HepG2 (cell line): ENCODE measurements at regions of chr1 and their contacts with region 1.

Region 1: GRCh38 chr1:245810789-245811337 is 656.1 kb downstream of the KIF26B start:
- DNase-seq: peak; percentile 89
- ATAC-seq: peak; percentile 97
- H3K4me3 ChIP-seq: peak overlapping the region in 1 of 3 experiments; percentile 22; a peak in 1 of 6 replicates
- H3K27ac ChIP-seq: peak overlapping the region; percentile 76
- H3K4me1 ChIP-seq: peaks cover 76% of the 10 kb centered on the region
- H3K27me3 ChIP-seq: no peaks in the 10 kb centered on the region
- CTCF ChIP-seq: no peak
- EP300 ChIP-seq: peak in 1 of 2 experiments; percentile 89; a peak in 2 of 4 replicates
- POLR2A ChIP-seq: no peak
- RAD21 ChIP-seq: no peak

Region 2: DNA sequence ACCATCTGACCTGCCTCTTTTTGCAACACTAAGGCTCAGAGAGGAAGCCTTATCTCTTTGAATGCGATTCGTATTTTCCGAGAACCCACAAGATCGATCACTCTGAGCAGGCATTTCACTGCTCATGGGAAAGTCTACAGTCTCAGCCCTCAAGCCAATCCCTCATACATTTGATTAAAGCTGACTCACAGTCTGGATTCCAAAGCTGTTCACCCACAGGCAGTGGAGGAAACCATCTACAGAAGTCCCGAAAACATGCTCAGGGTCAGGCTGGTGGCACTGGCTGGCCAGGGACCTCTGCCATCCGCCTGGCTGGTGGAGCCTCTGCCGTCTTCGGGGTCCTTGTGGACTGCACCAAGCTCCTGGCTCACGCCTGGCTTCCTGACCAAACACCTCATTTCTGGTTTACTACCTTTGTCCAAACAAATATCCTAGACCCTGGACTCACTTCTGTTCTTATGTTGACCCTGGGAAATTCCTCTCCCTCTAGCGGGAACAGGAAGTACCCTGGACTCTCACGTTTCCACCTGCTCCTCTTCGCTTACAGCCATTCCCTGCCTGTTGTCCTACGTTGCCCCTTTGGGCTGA is 46.2 kb after region 1 on chr1:
- CTCF ChIA-PET with region 1: no interaction called
- POLR2A ChIA-PET with region 1: interaction called, 9 read pairs
- in situ Hi-C with region 1: no loop called
- intact Hi-C with region 1: loop called (anchors 2 kb)
- DNase-seq: peak; percentile 82
- ATAC-seq: peak; percentile 92
- H3K4me3 ChIP-seq: peak overlapping the region; percentile 33 to 63 (median 38); a peak in 5 of 6 replicates
- H3K27ac ChIP-seq: peak overlapping the region; percentile 85
- H3K4me1 ChIP-seq: peaks cover 37% of the 10 kb centered on the region
- H3K27me3 ChIP-seq: no peaks in the 10 kb centered on the region
- CTCF ChIP-seq: peak; percentile 67
- EP300 ChIP-seq: peak in 1 of 2 experiments; percentile 45; a peak in 2 of 4 replicates
- POLR2A ChIP-seq: peak; percentile 56 to 65; a peak in 2 of 4 replicates
- RAD21 ChIP-seq: 0 out of 2 replicates have a peak, but pooled peaks have one; percentile 21

Region 3: DNA sequence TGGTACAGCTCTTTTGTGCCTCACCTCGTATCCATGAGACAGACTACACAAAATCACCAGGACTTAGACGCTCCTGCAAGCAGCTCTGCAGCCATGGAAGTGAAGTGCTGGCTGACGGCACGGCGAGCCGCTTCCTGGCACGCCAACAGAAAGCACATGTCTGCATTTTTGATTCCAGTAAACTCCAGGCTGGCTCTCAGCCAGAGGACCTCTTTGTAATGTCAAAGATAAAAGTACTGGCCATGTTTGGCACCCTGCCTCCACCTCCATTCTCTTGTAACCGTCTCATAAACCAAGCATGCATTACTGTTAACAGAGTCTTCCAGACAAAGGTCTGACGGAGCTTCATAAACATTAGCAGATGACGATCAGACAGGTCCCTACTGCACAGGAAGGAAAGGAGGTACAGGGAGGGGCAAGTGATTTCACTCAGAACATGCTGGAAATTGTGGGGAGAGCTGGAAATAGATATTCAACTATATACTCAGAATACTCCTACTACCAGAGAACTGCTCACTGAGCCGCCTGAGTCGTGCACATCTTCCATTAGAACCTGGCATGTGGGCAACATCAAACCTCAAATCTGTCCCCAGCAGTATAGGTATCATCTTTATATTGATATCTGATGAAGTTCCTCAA is 64.2 kb after region 1 on chr1:
- CTCF ChIA-PET with region 1: no interaction called
- POLR2A ChIA-PET with region 1: no interaction called
- in situ Hi-C with region 1: no loop called
- intact Hi-C with region 1: no loop called
- DNase-seq: no peak
- ATAC-seq: no peak
- H3K4me3 ChIP-seq: no peak overlapping the region
- H3K27ac ChIP-seq: no peak overlapping the region
- H3K4me1 ChIP-seq: peaks cover 7% of the 10 kb centered on the region; the same call in 1 of the 2 replicates
- H3K27me3 ChIP-seq: no peaks in the 10 kb centered on the region
- CTCF ChIP-seq: no peak
- EP300 ChIP-seq: no peak
- POLR2A ChIP-seq: no peak
- RAD21 ChIP-seq: no peak

Region 4: GRCh38 chr1:246297279-246298266 is 486.7 kb after region 1 on chr1:
- CTCF ChIA-PET with region 1: no interaction called
- POLR2A ChIA-PET with region 1: no interaction called
- in situ Hi-C with region 1: no loop called
- intact Hi-C with region 1: no loop called
- DNase-seq: no peak
- ATAC-seq: no peak
- H3K4me3 ChIP-seq: no peak overlapping the region
- H3K27ac ChIP-seq: no peak overlapping the region
- H3K4me1 ChIP-seq: no peaks in the 10 kb centered on the region
- H3K27me3 ChIP-seq: no peaks in the 10 kb centered on the region
- CTCF ChIP-seq: no peak
- EP300 ChIP-seq: no peak
- POLR2A ChIP-seq: no peak
- RAD21 ChIP-seq: no peak